ENCODE measurements at regions of chr4 and their contacts with region 1.

Region 1: DNA sequence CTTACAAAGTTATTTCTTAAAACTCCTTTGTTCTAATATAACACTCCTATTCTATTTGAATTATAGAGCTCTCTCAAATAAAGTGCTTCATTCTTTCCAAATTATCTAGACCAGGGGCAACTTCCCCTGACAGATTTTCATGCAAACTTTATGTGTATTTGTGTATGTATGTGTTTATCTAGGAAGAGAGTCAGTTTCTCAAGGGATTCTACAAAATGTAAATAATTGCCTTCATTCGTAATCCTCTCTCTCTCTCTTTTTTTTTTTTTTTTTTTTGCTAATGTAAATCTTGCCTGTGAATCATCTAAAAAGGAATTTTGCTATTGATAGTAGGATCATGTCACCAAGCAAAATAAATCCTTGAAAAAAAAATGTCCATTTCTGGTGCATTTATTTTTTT is 38.9 kb upstream of the RBPJ start:
- DNase-seq: peak; percentile 26
- H3K4me3 ChIP-seq: no peak overlapping the region
- H3K27ac ChIP-seq: no peak overlapping the region
- H3K27me3 ChIP-seq: no peaks in the 10 kb centered on the region
- CTCF ChIP-seq: no peak

Region 2: DNA sequence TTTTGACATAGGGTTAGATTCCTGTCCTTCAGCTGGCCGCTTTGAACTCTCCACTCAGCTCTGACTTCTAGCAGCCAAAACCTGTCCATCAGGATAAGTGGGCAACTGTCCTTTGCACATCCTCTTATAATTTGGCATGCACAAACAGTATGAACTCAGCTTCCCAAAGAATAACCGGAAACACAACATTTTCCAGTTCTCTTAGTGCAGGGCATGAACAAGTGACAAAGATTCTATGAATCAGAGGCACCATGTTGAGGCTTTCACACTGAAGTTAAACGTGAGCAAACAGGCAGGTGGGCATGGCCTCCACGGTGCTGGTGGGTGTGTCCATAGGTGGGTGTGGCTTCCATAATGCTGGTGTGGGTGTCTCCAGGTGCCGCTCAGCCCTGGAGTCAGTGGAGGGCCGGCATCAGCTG is 171.4 kb before region 1 on chr4:
- CTCF ChIA-PET with region 1: no interaction called
- POLR2A ChIA-PET with region 1: no interaction called
- DNase-seq: no peak
- H3K4me3 ChIP-seq: no peak overlapping the region
- H3K27ac ChIP-seq: no peak overlapping the region
- H3K27me3 ChIP-seq: no peaks in the 10 kb centered on the region
- CTCF ChIP-seq: no peak

Region 3: DNA sequence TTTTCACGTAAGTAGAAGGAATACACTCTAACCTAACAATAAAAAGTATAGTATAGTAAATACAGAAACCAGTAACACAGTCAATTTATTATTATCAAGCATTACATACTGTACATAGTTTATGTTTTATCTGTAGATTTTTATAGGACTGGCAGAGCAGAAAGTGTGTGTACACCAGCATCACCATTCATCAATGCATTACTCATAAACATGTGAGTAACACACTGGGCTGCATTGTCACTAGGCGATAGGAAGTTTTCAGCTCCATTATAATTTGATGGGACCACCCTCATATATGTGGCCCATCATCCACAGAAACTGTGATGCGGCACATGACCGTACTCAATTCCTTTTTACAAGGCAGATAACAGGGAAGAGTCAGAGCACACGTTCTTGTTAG is 98.9 kb before region 1 on chr4:
- CTCF ChIA-PET with region 1: no interaction called
- POLR2A ChIA-PET with region 1: interaction called, 10 read pairs
- DNase-seq: no peak
- H3K4me3 ChIP-seq: no peak overlapping the region
- H3K27ac ChIP-seq: no peak overlapping the region
- H3K27me3 ChIP-seq: no peaks in the 10 kb centered on the region
- CTCF ChIP-seq: no peak

Region 4: GRCh38 chr4:26199596-26199995 is 82.3 kb before region 1 on chr4:
- CTCF ChIA-PET with region 1: interaction called, 11 read pairs
- POLR2A ChIA-PET with region 1: no interaction called
- DNase-seq: no peak
- H3K4me3 ChIP-seq: no peak overlapping the region
- H3K27ac ChIP-seq: no peak overlapping the region
- H3K27me3 ChIP-seq: no peaks in the 10 kb centered on the region
- CTCF ChIP-seq: no peak